B cell (primary cell): ENCODE measurements at regions of chr7 and their contacts with region 1.

Region 1: GRCh38 chr7:149090397-149091195 is at the start of gene ZNF786:
- DNase-seq: peak; percentile 95
- ATAC-seq: peak; percentile 86
- H3K4me3 ChIP-seq: peak within 1 kb of the TSS; percentile 72 to 96 (median 80)
- H3K4me3 Mint-ChIP-seq: peak within 1 kb of the TSS; percentile 95
- H3K27ac ChIP-seq: peak within 1 kb of the TSS; percentile 90 to 93
- H3K27ac Mint-ChIP-seq: peak within 1 kb of the TSS; percentile 99
- H3K4me1 ChIP-seq: peaks cover 0 to 20% of the 10 kb centered on the region in 2 donors
- H3K4me1 Mint-ChIP-seq: peaks cover 28% of the 10 kb centered on the region
- H3K27me3 ChIP-seq: no peaks in the 10 kb centered on the region
- H3K27me3 Mint-ChIP-seq: no peaks in the 10 kb centered on the region
- CTCF ChIP-seq: peak; percentile 86
- total RNA-seq, gene ZNF786: 14.7 and 18.0 TPM in 2 replicates

Region 2: GRCh38 chr7:148527707-148528168 is 562.9 kb before region 1 on chr7:
- CTCF ChIA-PET with region 1: no interaction called
- POLR2A ChIA-PET with region 1: no interaction called
- intact Hi-C with region 1: loop called (anchors 1 kb)
- DNase-seq: peak; percentile 90
- ATAC-seq: peak; percentile 97
- H3K4me3 ChIP-seq: no peak overlapping the region
- H3K4me3 Mint-ChIP-seq: no peak overlapping the region
- H3K27ac ChIP-seq: no peak overlapping the region
- H3K27ac Mint-ChIP-seq: no peak overlapping the region
- H3K4me1 ChIP-seq: no peaks in the 10 kb centered on the region
- H3K4me1 Mint-ChIP-seq: peaks cover 14% of the 10 kb centered on the region
- H3K27me3 ChIP-seq: no peaks in the 10 kb centered on the region
- H3K27me3 Mint-ChIP-seq: no peaks in the 10 kb centered on the region
- CTCF ChIP-seq: peak; percentile 86

Region 3: DNA sequence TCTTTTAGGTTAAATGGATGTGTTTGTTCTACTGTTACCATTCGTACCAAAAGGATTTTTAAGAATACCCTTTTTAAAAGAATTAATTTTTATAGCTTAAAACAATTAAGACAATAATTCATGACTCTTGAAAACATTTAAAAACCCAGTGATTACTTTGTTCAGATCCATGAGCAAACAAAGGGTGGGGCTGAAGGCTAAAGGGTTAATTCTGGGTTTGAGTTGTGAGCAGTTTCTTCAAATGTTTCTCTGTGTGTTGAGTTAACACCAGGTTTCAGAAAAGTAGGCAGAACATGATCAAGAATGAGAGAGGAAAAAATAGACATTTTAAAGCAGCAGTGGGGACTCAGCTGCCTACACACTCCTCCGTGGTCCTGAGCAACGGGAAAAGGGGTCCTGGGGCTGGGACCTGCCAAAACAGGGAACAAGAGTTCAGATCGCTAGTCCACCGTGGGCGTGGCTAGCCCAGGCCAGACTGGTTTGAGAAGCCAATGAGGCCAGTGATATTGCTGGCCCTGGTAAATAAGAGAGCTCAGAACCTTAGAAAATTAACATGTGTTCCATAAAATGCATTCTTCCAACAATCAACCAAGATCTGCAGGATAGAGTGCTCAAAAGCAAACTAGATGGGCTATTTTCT is 191.6 kb before region 1 on chr7:
- CTCF ChIA-PET with region 1: no interaction called
- POLR2A ChIA-PET with region 1: no interaction called
- intact Hi-C with region 1: no loop called
- DNase-seq: no peak
- ATAC-seq: no peak
- H3K4me3 ChIP-seq: no peak overlapping the region
- H3K4me3 Mint-ChIP-seq: no peak overlapping the region
- H3K27ac ChIP-seq: no peak overlapping the region
- H3K27ac Mint-ChIP-seq: no peak overlapping the region
- H3K4me1 ChIP-seq: no peaks in the 10 kb centered on the region
- H3K4me1 Mint-ChIP-seq: no peaks in the 10 kb centered on the region
- H3K27me3 ChIP-seq: peaks cover 0 to 2% (median 0%) of the 10 kb centered on the region in 4 experiments
- H3K27me3 Mint-ChIP-seq: peaks cover 4% of the 10 kb centered on the region
- CTCF ChIP-seq: no peak

Region 4: DNA sequence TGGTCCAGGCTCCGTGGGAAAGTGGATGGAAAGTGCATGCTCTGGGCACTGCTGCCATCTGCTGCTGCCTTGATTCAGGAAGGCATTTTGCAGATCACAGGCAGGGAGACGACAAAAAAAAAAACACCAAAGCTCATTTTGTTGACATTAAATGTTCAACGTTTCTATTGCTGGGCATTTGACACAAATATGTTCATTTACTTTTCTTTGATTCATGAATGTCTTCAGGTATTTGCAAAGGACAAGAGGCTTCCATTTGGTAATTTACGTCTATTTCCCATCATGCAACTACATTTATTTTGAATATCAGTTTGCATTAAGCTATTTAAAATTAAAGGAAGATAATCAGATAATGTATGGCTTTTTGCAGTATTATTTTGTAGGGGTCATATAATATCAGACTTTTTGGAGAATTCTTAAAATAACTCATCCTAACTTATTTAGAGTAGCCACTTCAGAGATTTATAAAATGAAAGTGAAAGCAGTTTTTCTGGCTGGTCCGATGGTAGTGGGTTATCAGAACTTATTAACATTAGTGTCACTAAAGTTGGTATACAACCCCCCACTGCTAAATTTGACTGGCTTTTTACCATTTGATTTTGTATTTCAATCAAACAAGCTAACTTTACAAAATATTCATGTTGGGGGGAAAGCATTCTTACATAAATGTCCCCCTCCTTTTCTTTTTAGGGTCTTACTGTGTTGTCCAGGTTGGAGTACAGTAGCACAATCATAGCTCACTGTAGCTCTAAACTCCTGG is 127.6 kb before region 1 on chr7:
- CTCF ChIA-PET with region 1: no interaction called
- POLR2A ChIA-PET with region 1: no interaction called
- intact Hi-C with region 1: loop called (anchors 1 kb)
- DNase-seq: peak; percentile 87
- ATAC-seq: peak; percentile 60
- H3K4me3 ChIP-seq: peak overlapping the region; percentile 66 to 100 (median 75)
- H3K4me3 Mint-ChIP-seq: peak overlapping the region; percentile 98
- H3K27ac ChIP-seq: peak overlapping the region; percentile 56 to 89
- H3K27ac Mint-ChIP-seq: peak overlapping the region; percentile 90
- H3K4me1 ChIP-seq: peaks cover 9 to 27% of the 10 kb centered on the region in 2 donors
- H3K4me1 Mint-ChIP-seq: peaks cover 28% of the 10 kb centered on the region
- H3K27me3 ChIP-seq: no peaks in the 10 kb centered on the region
- H3K27me3 Mint-ChIP-seq: no peaks in the 10 kb centered on the region
- CTCF ChIP-seq: peak; percentile 78

Region 5: DNA sequence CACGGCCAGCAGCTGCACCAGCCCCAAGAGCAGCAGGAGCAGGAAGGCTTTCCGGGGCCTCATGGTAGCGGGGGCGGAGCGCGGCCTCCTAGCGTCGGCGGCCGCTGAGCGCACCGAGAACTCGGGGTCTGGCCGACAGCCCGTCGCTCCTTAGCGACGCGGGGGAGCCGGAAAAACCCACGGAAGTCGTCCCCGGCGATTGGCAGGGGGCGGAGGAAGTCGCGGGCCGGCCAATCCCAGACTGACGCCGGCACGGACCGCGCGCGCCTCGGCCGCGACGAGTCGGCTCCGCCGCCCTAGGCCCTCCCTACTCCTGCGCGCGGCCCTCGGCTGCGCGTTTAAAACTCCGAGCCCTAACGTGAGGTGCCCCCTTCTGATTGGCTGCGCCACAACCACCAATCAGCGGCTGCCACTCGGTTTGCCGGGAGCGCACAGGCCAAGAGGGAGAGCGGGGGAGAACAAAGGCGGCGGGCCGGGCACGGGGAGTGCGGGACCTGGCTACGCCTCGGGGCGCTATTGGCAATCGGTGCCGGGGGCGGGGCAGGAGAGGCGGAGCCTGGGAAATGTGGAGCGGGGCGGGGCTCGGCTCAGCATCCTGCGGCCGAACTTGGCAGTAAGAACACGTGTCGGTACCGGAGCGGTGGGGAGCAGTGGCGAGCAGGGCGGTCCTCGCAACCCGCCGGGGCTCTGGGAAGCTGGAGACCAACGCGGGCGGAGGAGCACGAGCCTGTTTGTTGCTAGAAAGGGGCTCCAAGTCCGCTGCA is 62.1 kb before region 1 on chr7 and contains the start of gene PDIA4:
- CTCF ChIA-PET with region 1: no interaction called
- POLR2A ChIA-PET with region 1: no interaction called
- intact Hi-C with region 1: loop called (anchors 1 kb)
- DNase-seq: peak; percentile 99
- ATAC-seq: peak; percentile 86
- H3K4me3 ChIP-seq: peak within 1 kb of the TSS; percentile 51 to 77 (median 73)
- H3K4me3 Mint-ChIP-seq: peak within 1 kb of the TSS; percentile 93
- H3K27ac ChIP-seq: peak within 1 kb of the TSS; percentile 39 to 94
- H3K27ac Mint-ChIP-seq: peak within 1 kb of the TSS; percentile 91
- H3K4me1 ChIP-seq: peaks cover 19 to 21% of the 10 kb centered on the region in 2 donors
- H3K4me1 Mint-ChIP-seq: peaks cover 39% of the 10 kb centered on the region
- H3K27me3 ChIP-seq: no peaks in the 10 kb centered on the region
- H3K27me3 Mint-ChIP-seq: no peaks in the 10 kb centered on the region
- CTCF ChIP-seq: peak; percentile 47
- total RNA-seq, gene PDIA4: 34.7 and 36.5 TPM in 2 replicates

Region 6: GRCh38 chr7:149074116-149074885 is 16.3 kb before region 1 on chr7:
- CTCF ChIA-PET with region 1: no interaction called
- POLR2A ChIA-PET with region 1: no interaction called
- intact Hi-C with region 1: no loop called
- DNase-seq: no peak
- ATAC-seq: no peak
- H3K4me3 ChIP-seq: no peak overlapping the region
- H3K4me3 Mint-ChIP-seq: no peak overlapping the region
- H3K27ac ChIP-seq: no peak overlapping the region
- H3K27ac Mint-ChIP-seq: no peak overlapping the region
- H3K4me1 ChIP-seq: no peaks in the 10 kb centered on the region
- H3K4me1 Mint-ChIP-seq: no peaks in the 10 kb centered on the region
- H3K27me3 ChIP-seq: no peaks in the 10 kb centered on the region
- H3K27me3 Mint-ChIP-seq: no peaks in the 10 kb centered on the region
- CTCF ChIP-seq: no peak

Region 7: DNA sequence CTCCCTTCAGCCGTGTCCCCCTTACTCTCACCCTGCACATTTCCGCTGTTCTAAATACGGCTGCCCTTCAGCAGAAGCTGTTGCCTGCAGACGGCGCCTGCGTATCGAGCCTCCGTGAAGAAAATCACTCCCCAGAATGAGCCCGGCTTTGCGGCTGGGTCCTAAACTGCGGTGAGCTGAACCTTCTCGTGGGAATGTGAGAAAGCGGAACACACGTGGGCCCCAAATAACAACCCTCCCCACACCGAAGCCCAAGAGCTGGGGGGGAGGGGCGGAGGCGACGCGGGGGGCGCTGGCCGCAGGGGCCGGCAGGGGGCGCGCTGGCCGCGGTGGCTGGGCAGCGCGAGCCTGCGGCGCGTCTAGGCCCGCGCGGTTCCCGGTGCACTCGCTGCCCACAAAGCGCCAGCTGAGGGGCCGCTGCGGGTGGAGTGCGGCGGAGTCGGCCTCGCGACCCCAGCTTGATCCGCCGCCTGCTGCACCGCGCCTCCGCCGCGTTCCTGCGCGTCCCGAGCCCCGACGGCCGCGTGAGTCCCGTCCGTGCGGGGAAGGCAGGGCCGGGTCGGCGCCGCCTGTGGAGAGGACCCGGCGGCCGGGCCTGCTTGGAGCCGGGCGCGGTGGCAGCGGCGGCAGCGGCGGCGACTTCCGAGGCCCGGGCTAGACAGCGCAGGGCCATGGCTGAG is 56.6 kb after region 1 on chr7 and contains the start of gene ZNF398:
- CTCF ChIA-PET with region 1: interaction called, 3 read pairs
- POLR2A ChIA-PET with region 1: interaction called, 11 read pairs
- intact Hi-C with region 1: loop called (anchors 1 kb)
- DNase-seq: peak; percentile 95
- ATAC-seq: peak; percentile 86
- H3K4me3 ChIP-seq: peak within 1 kb of the TSS; percentile 48 to 87 (median 79)
- H3K4me3 Mint-ChIP-seq: peak within 1 kb of the TSS; percentile 93
- H3K27ac ChIP-seq: peak within 1 kb of the TSS; percentile 82 to 83
- H3K27ac Mint-ChIP-seq: peak within 1 kb of the TSS; percentile 96
- H3K4me1 ChIP-seq: peaks cover 22 to 30% of the 10 kb centered on the region in 2 donors
- H3K4me1 Mint-ChIP-seq: peaks cover 32% of the 10 kb centered on the region
- H3K27me3 ChIP-seq: no peaks in the 10 kb centered on the region
- H3K27me3 Mint-ChIP-seq: no peaks in the 10 kb centered on the region
- CTCF ChIP-seq: peak; percentile 85
- total RNA-seq, gene ZNF398: 21.7 and 22.5 TPM in 2 replicates

Region 8: GRCh38 chr7:149180722-149181449 is 90.3 kb after region 1 on chr7:
- CTCF ChIA-PET with region 1: no interaction called
- POLR2A ChIA-PET with region 1: no interaction called
- intact Hi-C with region 1: no loop called
- DNase-seq: no peak
- ATAC-seq: no peak
- H3K4me3 ChIP-seq: no peak overlapping the region
- H3K4me3 Mint-ChIP-seq: no peak overlapping the region
- H3K27ac ChIP-seq: no peak overlapping the region
- H3K27ac Mint-ChIP-seq: no peak overlapping the region
- H3K4me1 ChIP-seq: no peaks in the 10 kb centered on the region
- H3K4me1 Mint-ChIP-seq: no peaks in the 10 kb centered on the region
- H3K27me3 ChIP-seq: no peaks in the 10 kb centered on the region
- H3K27me3 Mint-ChIP-seq: no peaks in the 10 kb centered on the region
- CTCF ChIP-seq: no peak

Region 9: GRCh38 chr7:149261829-149262617 is 171.4 kb after region 1 on chr7 and contains the start of gene ZNF783:
- CTCF ChIA-PET with region 1: no interaction called
- POLR2A ChIA-PET with region 1: no interaction called
- intact Hi-C with region 1: loop called (anchors 1 kb)
- DNase-seq: peak; percentile 94
- ATAC-seq: peak; percentile 93
- H3K4me3 ChIP-seq: peak within 1 kb of the TSS in 4 of 5 experiments; percentile 64 to 75 (median 68)
- H3K4me3 Mint-ChIP-seq: peak within 1 kb of the TSS; percentile 94
- H3K27ac ChIP-seq: peak within 1 kb of the TSS; percentile 69 to 76
- H3K27ac Mint-ChIP-seq: peak within 1 kb of the TSS; percentile 92
- H3K4me1 ChIP-seq: peaks cover 13 to 17% of the 10 kb centered on the region in 2 donors
- H3K4me1 Mint-ChIP-seq: peaks cover 21% of the 10 kb centered on the region
- H3K27me3 ChIP-seq: no peaks in the 10 kb centered on the region
- H3K27me3 Mint-ChIP-seq: no peaks in the 10 kb centered on the region
- CTCF ChIP-seq: peak; percentile 86
- total RNA-seq, gene ZNF783: 43.8 and 44.8 TPM in 2 replicates